ENCODE measurements at regions of chr2 and their contacts with region 1.

Region 1: GRCh38 chr2:109510136-109511028 is 103.4 kb downstream of the SEPTIN10 start:
- DNase-seq: peak; percentile 7
- H3K4me3 ChIP-seq: no peak overlapping the region
- H3K27ac ChIP-seq: no peak overlapping the region
- H3K4me1 ChIP-seq: peaks cover 0 to 35% (median 21%) of the 10 kb centered on the region in 3 donors
- H3K27me3 ChIP-seq: no peaks in the 10 kb centered on the region
- CTCF ChIP-seq: peak; percentile 74 to 94 (median 92)
- POLR2A ChIP-seq: no peak

Region 2: GRCh38 chr2:109128048-109128465 is 382.3 kb before region 1 on chr2:
- intact Hi-C with region 1: loop called (anchors 5 kb)
- DNase-seq: no peak
- H3K4me3 ChIP-seq: peak overlapping the region; percentile 61 to 84 (median 71)
- H3K27ac ChIP-seq: peak overlapping the region; percentile 72 to 89 (median 74)
- H3K4me1 ChIP-seq: peaks cover 15 to 65% (median 16%) of the 10 kb centered on the region in 3 donors
- H3K27me3 ChIP-seq: peaks cover 0 to 31% (median 0%) of the 10 kb centered on the region in 4 donors
- CTCF ChIP-seq: peak; percentile 80 to 92 (median 86)
- POLR2A ChIP-seq: peak in 1 of 4 donors; percentile 49

Region 3: DNA sequence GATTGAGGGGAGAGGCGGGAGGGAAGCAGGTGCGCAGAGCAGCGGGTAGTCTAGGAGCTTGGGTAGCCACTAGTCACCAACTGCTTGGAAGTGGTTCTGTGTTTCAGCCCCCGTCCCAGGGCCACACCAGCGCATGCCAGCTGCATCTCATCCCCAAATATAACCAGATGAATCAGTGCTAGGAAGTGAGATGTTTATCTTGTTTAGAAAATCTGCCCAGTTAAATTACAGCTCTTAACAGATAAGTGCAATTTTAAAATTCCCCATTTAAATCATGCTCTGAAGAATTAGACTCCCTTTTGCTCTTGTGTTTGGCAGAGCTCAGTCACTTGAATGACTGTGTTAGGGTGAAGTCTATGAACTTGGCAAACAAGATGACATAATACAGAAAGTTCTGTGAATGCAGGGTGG is 90.4 kb before region 1 on chr2:
- intact Hi-C with region 1: no loop called
- DNase-seq: no peak
- H3K4me3 ChIP-seq: no peak overlapping the region
- H3K27ac ChIP-seq: no peak overlapping the region
- H3K4me1 ChIP-seq: peaks cover 0 to 14% (median 0%) of the 10 kb centered on the region in 3 donors
- H3K27me3 ChIP-seq: no peaks in the 10 kb centered on the region
- CTCF ChIP-seq: no peak
- POLR2A ChIP-seq: no peak